Naive thymus-derived CD4-positive, alpha-beta T cell (primary cell): ENCODE measurements at regions of chr10 and their contacts with region 1.

Region 1: DNA sequence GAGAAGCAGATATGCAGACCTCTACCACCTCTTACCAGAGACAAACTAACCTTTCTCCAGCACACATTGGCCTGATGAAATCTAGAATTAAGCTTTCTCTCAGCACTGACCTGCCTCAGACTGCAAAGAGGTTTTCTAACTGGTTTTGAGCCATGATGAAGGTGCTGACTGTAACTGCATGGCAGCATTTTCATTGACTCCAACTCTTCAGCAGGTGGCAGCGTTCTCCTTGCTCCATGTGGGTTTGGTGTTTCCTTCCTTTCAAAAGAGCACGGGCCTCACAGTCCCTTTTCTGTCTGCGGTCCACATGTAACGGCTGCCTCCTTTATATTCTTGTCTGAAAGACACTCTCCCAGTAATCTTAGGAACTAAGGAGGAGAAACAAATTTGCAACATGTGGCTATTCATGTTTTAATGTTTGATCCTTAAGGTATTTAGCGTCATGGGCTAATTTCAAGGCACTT is 12.6 kb downstream of the KLLN start:
- DNase-seq: peak in 8 of 9 donors; percentile 28 to 68 (median 54)
- ATAC-seq: peak; percentile 87
- H3K4me3 ChIP-seq: no peak overlapping the region
- H3K4me3 Mint-ChIP-seq: peak overlapping the region in 3 of 10 donors; percentile 1 to 49 (median 6)
- H3K27ac ChIP-seq: no peak overlapping the region
- H3K27ac Mint-ChIP-seq: peak overlapping the region in 1 of 9 donors; percentile 2
- H3K4me1 ChIP-seq: peaks cover 0 to 3% of the 10 kb centered on the region in 2 donors
- H3K4me1 Mint-ChIP-seq: peaks cover 6 to 23% (median 19%) of the 10 kb centered on the region in 7 donors
- H3K27me3 ChIP-seq: no peaks in the 10 kb centered on the region
- H3K27me3 Mint-ChIP-seq: peaks cover 0 to 8% (median 0%) of the 10 kb centered on the region in 5 donors

Region 2: GRCh38 chr10:88114368-88114767 is 263.6 kb after region 1 on chr10:
- CTCF ChIA-PET with region 1: interaction called, 9 read pairs
- POLR2A ChIA-PET with region 1: no interaction called
- intact Hi-C with region 1: loop called in 1 of 2 experiments (anchors 1 kb)
- DNase-seq: peak in 5 of 9 donors; percentile 11 to 48 (median 37)
- ATAC-seq: peak; percentile 74
- H3K4me3 ChIP-seq: no peak overlapping the region
- H3K4me3 Mint-ChIP-seq: peak overlapping the region in 5 of 10 donors; percentile 3 to 52 (median 32)
- H3K27ac ChIP-seq: no peak overlapping the region
- H3K27ac Mint-ChIP-seq: no peak overlapping the region
- H3K4me1 ChIP-seq: peaks cover 11 to 26% of the 10 kb centered on the region in 2 donors
- H3K4me1 Mint-ChIP-seq: peaks cover 4 to 32% (median 15%) of the 10 kb centered on the region in 7 donors
- H3K27me3 ChIP-seq: no peaks in the 10 kb centered on the region
- H3K27me3 Mint-ChIP-seq: peaks cover 0 to 12% (median 0%) of the 10 kb centered on the region in 5 donors

Region 3: DNA sequence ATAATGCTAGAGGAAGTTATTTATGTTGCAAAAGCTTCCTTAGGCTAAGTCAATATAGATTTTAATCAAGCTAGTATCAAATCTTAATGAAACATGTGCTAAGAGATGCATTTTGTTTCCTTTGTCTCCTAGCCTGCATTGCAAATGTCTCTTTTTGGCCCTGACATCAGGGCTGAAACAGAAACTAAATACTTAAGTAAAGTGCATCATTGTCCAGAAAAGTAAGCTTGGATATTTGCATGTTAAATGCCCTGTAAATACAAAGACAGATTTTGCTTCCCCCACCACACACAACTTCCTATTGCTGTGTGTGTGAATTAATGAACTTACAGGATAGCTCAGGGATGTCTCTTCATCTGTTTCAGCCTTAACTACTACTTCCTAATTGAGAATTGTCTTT is 1019.3 kb after region 1 on chr10:
- CTCF ChIA-PET with region 1: no interaction called
- POLR2A ChIA-PET with region 1: no interaction called
- intact Hi-C with region 1: no loop called
- DNase-seq: no peak
- ATAC-seq: no peak
- H3K4me3 ChIP-seq: no peak overlapping the region
- H3K4me3 Mint-ChIP-seq: no peak overlapping the region
- H3K27ac ChIP-seq: no peak overlapping the region
- H3K27ac Mint-ChIP-seq: no peak overlapping the region
- H3K4me1 ChIP-seq: no peaks in the 10 kb centered on the region
- H3K4me1 Mint-ChIP-seq: peaks cover 0 to 6% (median 0%) of the 10 kb centered on the region in 7 donors
- H3K27me3 ChIP-seq: no peaks in the 10 kb centered on the region
- H3K27me3 Mint-ChIP-seq: peaks cover 0 to 22% (median 0%) of the 10 kb centered on the region in 5 donors